PC-9 (cell line): ENCODE measurements at regions of chr14 and their contacts with region 1.

Region 1: DNA sequence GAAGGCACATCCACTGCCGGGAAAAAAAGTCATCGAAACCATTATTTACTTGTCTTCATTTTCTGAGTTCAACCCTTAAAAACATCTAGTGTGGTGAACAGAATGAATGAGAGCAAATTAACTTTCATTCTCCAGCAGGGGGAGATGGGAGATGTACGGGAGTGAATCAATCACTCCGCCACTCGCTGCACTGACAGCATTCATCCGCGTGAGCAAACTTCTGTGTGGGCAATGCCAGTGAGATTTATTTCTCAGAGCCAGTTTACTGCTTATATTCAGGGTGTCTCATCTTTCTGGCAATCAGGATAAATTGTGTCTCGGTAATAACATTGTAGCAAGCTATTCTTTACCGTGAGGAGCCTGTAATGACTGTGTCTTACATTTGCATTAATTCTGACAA is 463.6 kb upstream of the MIS18BP1 start:
- DNase-seq: no peak
- H3K4me3 ChIP-seq: no peak overlapping the region
- H3K27ac ChIP-seq: no peak overlapping the region
- H3K4me1 ChIP-seq: no peaks in the 10 kb centered on the region
- H3K27me3 ChIP-seq: no peaks in the 10 kb centered on the region
- CTCF ChIP-seq: no peak

Region 2: GRCh38 chr14:45651890-45652289 is 64.7 kb before region 1 on chr14:
- CTCF ChIA-PET with region 1: no interaction called
- POLR2A ChIA-PET with region 1: interaction called, 20 read pairs
- intact Hi-C with region 1: no loop called
- DNase-seq: no peak
- H3K4me3 ChIP-seq: no peak overlapping the region
- H3K27ac ChIP-seq: no peak overlapping the region
- H3K4me1 ChIP-seq: no peaks in the 10 kb centered on the region
- H3K27me3 ChIP-seq: no peaks in the 10 kb centered on the region
- CTCF ChIP-seq: no peak